BJ (cell line): ENCODE measurements at regions of chr15 and their contacts with region 1.

Region 1: GRCh38 chr15:35740761-35741160 is 194.8 kb upstream of the DPH6 start:
- DNase-seq: no peak
- H3K4me3 ChIP-seq: no peak overlapping the region
- H3K27me3 ChIP-seq: no peaks in the 10 kb centered on the region
- CTCF ChIP-seq: no peak

Region 2: DNA sequence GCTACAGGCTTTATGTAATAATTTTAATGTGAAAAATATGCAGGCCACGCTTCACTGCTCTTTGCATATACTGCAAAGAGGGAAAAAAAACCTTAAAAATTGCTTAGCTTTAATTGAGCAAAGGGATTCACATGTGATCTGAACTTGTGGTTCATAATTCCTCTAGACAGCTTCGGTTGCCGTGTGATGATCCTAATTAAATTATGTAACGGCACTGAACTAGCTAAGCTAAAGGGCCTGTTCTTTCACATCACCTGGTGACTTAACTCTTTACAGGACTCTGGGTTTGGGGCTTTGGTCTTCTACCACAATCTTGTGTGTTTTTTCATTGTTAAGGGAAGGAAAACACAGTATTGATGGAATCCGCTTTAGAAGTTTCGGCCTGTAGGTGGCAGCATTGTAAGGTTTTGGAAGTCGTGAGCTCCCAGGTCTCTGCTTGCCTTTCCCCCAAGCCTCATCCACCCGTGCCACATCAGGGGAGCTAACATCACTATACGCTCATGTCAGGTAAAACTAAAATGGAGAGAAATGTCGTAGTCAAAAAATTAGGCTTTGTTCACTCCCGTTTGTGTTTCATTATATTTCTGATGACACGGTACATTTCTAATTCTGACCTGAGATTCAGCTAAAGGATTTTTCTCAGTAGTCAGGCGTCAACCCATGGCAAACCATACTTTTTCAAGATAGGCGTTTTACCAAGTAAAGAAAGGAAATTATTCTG is 10.8 kb after region 1 on chr15:
- CTCF ChIA-PET with region 1: interaction called, 48 read pairs
- POLR2A ChIA-PET with region 1: no interaction called
- DNase-seq: no peak
- H3K4me3 ChIP-seq: no peak overlapping the region
- H3K27me3 ChIP-seq: no peaks in the 10 kb centered on the region
- CTCF ChIP-seq: peak; percentile 74

Region 3: DNA sequence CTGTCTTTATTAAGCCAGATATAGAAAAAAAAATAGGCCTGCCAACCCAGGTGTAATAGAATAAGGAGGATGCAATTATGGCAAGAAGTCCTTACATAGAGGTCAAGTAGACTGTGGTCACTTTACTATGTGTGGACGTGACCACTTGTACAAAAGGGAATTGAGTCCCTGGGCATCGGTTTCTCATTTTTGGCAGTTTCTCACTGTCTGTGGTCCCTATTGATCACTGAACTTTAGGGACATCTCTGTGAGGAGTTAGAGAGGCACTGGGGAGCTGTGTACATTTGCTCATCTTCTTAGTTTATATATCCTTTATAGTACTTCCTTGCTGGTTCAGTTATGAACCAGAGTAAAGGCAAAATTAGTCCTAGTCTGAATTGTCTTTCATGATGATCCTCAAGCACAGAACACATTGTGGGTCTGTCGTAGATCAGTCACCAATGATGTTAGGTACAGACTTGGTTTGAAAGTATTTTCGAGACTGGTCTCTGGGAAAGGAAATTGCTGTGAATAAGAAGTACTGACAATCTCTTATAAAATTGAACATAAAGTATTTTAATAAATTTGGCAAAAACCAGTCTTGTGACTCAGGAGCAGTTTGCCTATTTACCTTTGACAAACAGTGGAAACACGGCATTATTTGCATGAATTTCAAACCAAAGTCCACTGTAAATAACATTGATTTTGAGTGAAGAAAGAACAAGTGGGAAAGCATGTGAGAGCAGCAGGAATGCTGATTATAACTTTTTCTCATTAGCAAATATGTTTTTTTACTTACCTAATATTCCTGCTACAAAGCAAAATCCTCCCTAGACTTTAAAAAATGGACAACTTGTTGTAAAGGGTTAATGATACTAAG is 24.1 kb after region 1 on chr15:
- CTCF ChIA-PET with region 1: no interaction called
- POLR2A ChIA-PET with region 1: no interaction called
- DNase-seq: no peak
- H3K4me3 ChIP-seq: no peak overlapping the region
- H3K27me3 ChIP-seq: no peaks in the 10 kb centered on the region
- CTCF ChIP-seq: no peak

Region 4: GRCh38 chr15:36133742-36134141 is 393.0 kb after region 1 on chr15:
- CTCF ChIA-PET with region 1: no interaction called
- POLR2A ChIA-PET with region 1: no interaction called
- DNase-seq: no peak
- H3K4me3 ChIP-seq: no peak overlapping the region
- H3K27me3 ChIP-seq: no peaks in the 10 kb centered on the region
- CTCF ChIP-seq: no peak